Caco-2 (cell line): ENCODE measurements at regions of chr5 and their contacts with region 1.

Region 1: GRCh38 chr5:56200856-56201666 is 32.1 kb downstream of the ANKRD55 start:
- DNase-seq: peak; percentile 84 to 85
- H3K4me3 ChIP-seq: no peak overlapping the region
- H3K4me3 Mint-ChIP-seq: no peak overlapping the region
- H3K27ac Mint-ChIP-seq: peak overlapping the region; percentile 42
- H3K4me1 ChIP-seq: peaks cover 21% of the 10 kb centered on the region
- H3K4me1 Mint-ChIP-seq: peaks cover 18% of the 10 kb centered on the region
- H3K27me3 ChIP-seq: no peaks in the 10 kb centered on the region
- H3K27me3 Mint-ChIP-seq: no peaks in the 10 kb centered on the region
- CTCF ChIP-seq: peak; percentile 73 to 93

Region 2: DNA sequence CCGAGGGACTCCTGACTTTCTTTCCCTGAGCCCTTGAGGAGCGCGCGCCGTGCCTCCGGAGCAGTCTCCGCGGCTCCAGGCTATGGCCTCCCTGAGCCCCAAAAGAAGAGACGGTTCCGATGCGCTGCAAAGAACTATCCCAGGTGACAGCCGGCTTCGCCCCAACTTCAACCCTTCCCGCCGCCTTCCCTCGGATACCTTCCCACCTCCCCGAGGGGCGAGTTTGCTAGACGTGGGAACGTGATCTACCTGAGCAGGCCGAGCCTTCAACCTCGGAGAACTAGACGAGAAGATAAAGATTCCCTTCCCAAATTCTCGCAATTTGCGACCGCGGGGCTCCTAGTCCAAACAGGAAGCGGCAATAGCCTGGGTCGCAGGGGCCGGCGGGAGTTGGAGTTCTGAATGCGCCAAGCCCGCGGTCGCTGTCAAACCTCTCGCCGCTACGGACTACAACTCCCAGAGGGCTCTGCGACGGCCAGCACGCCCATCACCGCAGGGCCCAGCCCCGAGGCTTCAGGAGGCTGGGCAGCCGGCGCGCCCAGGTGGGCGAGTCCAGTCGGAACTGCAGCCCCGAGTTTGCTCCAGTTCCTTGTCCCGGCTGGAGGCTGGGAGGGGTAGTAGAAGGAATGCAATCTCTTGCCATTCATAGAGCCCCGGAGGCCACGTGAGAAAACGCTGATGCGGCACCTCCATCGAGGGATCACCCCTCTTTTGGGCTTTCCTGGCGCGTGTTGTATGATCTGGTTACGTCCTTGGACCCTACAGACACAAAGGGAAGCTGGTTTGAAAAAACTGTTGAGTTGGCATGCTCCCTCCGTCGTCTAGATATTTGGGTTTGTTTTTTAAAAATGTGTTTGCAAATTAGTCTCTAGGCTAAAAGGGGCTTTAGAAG is 488.8 kb before region 1 on chr5 and contains the start of gene SLC38A9:
- CTCF ChIA-PET with region 1: no interaction called
- POLR2A ChIA-PET with region 1: no interaction called
- intact Hi-C with region 1: loop called (anchors 5 kb)
- DNase-seq: peak; percentile 96 to 97
- H3K4me3 ChIP-seq: peak within 1 kb of the TSS; percentile 97
- H3K4me3 Mint-ChIP-seq: peak within 1 kb of the TSS; percentile 100
- H3K27ac Mint-ChIP-seq: peak within 1 kb of the TSS; percentile 99
- H3K4me1 ChIP-seq: peaks cover 11% of the 10 kb centered on the region
- H3K4me1 Mint-ChIP-seq: peaks cover 6% of the 10 kb centered on the region
- H3K27me3 ChIP-seq: no peaks in the 10 kb centered on the region
- H3K27me3 Mint-ChIP-seq: no peaks in the 10 kb centered on the region
- CTCF ChIP-seq: no peak
- total RNA-seq, gene SLC38A9: 65.4 and 66.9 TPM in 2 replicates

Region 3: GRCh38 chr5:55982957-55983381 is 218.1 kb before region 1 on chr5:
- CTCF ChIA-PET with region 1: interaction called, 12 read pairs
- POLR2A ChIA-PET with region 1: no interaction called
- intact Hi-C with region 1: loop called (anchors 1 kb)
- DNase-seq: peak; percentile 50 to 60
- H3K4me3 ChIP-seq: no peak overlapping the region
- H3K4me3 Mint-ChIP-seq: no peak overlapping the region
- H3K27ac Mint-ChIP-seq: no peak overlapping the region
- H3K4me1 ChIP-seq: peaks cover 50% of the 10 kb centered on the region
- H3K4me1 Mint-ChIP-seq: peaks cover 30% of the 10 kb centered on the region
- H3K27me3 ChIP-seq: no peaks in the 10 kb centered on the region
- H3K27me3 Mint-ChIP-seq: no peaks in the 10 kb centered on the region
- CTCF ChIP-seq: peak; percentile 36 to 57

Region 4: DNA sequence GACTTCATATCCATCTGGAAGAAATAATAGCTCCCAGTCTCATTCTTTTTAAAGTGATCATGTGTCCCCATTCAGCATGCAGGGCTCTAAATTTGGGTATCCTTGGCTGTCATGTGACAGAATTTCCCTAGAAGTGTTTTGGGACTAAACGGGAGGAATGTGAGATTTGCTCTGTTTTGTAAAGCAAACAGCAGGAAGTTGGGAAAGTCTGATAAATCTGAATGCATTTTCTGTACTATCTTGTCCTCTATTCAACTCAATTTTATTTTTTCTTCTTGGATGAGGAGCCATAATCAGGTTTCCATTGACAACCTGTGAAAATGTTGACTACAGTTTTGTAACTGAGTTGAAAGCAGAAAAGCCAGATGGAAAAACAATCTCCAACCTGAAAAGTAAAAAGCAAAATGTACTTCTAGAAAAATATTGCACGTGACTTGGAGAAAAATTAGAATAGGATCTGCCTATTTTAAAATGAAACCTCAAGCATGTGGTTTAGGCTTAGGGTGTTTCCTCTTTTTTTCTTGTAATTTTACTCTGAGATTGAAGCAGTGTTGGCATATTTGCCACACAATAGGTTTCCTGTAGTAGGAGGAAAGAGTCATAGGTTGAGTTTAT is 130.1 kb before region 1 on chr5:
- CTCF ChIA-PET with region 1: interaction called, 4 read pairs
- POLR2A ChIA-PET with region 1: no interaction called
- intact Hi-C with region 1: loop called (anchors 1 kb)
- DNase-seq: no peak
- H3K4me3 ChIP-seq: no peak overlapping the region
- H3K4me3 Mint-ChIP-seq: no peak overlapping the region
- H3K27ac Mint-ChIP-seq: peak overlapping the region; percentile 30
- H3K4me1 ChIP-seq: peaks cover 56% of the 10 kb centered on the region
- H3K4me1 Mint-ChIP-seq: peaks cover 34% of the 10 kb centered on the region
- H3K27me3 ChIP-seq: no peaks in the 10 kb centered on the region
- H3K27me3 Mint-ChIP-seq: no peaks in the 10 kb centered on the region
- CTCF ChIP-seq: no peak

Region 5: GRCh38 chr5:56123531-56124243 is 77.4 kb before region 1 on chr5:
- CTCF ChIA-PET with region 1: interaction called, 11 read pairs
- POLR2A ChIA-PET with region 1: no interaction called
- intact Hi-C with region 1: loop called (anchors 5 kb)
- DNase-seq: peak; percentile 94 to 98
- H3K4me3 ChIP-seq: no peak overlapping the region
- H3K4me3 Mint-ChIP-seq: peak overlapping the region; percentile 65
- H3K27ac Mint-ChIP-seq: peak overlapping the region; percentile 99
- H3K4me1 ChIP-seq: peaks cover 46% of the 10 kb centered on the region
- H3K4me1 Mint-ChIP-seq: peaks cover 32% of the 10 kb centered on the region
- H3K27me3 ChIP-seq: no peaks in the 10 kb centered on the region
- H3K27me3 Mint-ChIP-seq: no peaks in the 10 kb centered on the region
- CTCF ChIP-seq: no peak

Region 6: DNA sequence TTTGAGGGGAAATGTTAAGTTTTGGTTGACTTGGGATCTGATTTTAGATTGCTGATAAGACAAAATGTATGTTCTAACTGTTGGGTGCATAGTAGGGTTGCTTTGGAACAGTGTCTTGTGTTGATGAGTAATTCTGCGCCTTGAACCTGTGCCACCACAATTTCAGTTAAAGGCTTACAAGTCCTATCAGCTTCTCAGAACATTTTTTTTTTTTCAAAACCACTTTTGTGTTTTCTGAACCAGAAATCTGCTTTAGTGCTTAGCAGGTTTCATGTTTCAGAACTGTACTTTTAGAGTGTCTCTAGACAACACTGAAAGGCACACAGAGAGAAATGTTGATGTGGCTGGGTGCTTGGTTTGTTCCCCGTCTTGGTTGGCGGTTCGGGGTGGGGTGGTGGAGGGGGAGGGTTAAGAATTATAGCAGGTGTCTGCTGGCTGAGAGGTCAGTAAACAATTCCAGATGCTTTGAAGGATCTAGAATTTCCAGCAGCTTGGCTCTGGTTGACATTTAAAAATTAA is 52.5 kb before region 1 on chr5:
- CTCF ChIA-PET with region 1: interaction called, 7 read pairs
- POLR2A ChIA-PET with region 1: no interaction called
- intact Hi-C with region 1: loop called (anchors 1 kb)
- DNase-seq: no peak
- H3K4me3 ChIP-seq: no peak overlapping the region
- H3K4me3 Mint-ChIP-seq: no peak overlapping the region
- H3K27ac Mint-ChIP-seq: peak overlapping the region; percentile 32
- H3K4me1 ChIP-seq: peaks cover 55% of the 10 kb centered on the region
- H3K4me1 Mint-ChIP-seq: peaks cover 38% of the 10 kb centered on the region
- H3K27me3 ChIP-seq: no peaks in the 10 kb centered on the region
- H3K27me3 Mint-ChIP-seq: no peaks in the 10 kb centered on the region
- CTCF ChIP-seq: no peak

Region 7: DNA sequence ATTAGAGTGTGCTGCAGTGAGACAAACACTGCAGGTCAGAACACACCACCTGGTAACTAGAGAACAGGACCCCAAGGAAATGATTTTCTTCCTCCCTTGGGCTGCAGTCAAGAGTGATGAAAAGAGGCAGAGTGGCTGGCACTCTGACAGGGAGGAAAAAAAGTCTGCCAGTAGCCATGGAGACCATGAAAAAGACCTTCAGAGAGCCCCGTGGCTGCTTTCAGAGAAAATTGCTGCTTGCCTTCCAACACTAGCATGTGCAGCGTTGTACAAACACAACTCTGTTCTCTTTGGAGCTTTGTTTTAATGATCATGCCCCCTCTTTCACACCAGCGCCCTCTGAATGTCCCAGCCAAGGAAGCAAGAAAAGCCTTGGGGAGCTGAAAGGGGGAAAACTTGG is 36.7 kb before region 1 on chr5:
- CTCF ChIA-PET with region 1: no interaction called
- POLR2A ChIA-PET with region 1: no interaction called
- intact Hi-C with region 1: no loop called
- DNase-seq: no peak
- H3K4me3 ChIP-seq: no peak overlapping the region
- H3K4me3 Mint-ChIP-seq: no peak overlapping the region
- H3K27ac Mint-ChIP-seq: no peak overlapping the region
- H3K4me1 ChIP-seq: peaks cover 27% of the 10 kb centered on the region
- H3K4me1 Mint-ChIP-seq: peaks cover 32% of the 10 kb centered on the region
- H3K27me3 ChIP-seq: no peaks in the 10 kb centered on the region
- H3K27me3 Mint-ChIP-seq: no peaks in the 10 kb centered on the region
- CTCF ChIP-seq: no peak